AG04449 (cell line): ENCODE measurements at regions of chr17 and their contacts with region 1.

Region 1: DNA sequence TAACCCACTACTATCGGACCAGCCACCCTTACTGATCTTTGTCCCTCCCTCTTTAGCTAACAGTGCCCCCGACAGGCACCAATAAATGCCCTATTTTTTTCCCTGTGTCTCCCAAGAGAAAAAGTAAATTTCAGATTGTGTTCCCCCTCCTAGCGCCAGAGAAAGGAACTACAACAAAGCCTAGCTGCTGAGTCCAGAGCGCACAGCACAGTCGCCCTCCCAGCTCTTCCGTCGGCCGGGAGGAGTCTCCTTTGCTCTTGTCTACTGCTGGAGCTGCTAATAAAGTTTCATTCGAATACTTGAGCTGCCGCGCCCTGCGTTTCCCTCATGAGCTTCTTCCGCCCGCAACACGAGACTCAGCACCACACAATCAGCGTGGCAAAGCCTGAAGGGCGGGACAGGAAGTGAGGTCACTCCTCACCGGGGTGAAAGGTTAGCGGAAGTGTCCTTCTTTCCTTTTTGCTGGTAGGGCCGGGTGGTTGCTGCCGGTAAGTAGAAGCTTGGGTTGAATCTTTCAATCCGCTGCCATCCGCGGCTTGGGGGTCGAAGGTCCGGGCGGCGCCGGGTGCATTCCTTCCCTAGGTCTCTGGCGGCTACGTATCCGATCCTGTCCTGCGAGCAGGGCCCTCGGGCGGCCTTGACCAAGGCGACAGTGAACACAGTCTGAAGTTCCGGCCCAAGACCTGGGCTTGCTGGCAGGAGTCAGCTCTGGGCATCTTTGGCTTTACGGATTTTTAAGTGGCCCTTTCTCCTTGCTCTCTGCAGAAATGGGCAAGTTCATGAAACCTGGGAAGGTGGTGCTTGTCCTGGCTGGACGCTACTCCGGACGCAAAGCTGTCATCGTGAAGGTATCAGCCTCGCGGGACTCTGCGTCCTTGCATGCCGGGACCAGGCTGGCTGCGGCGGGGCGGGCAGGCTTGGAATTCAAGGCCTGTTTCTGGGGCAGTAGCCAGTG is at the start of gene RPL27:
- DNase-seq: peak; percentile 100
- H3K4me3 ChIP-seq: peak within 1 kb of the TSS; percentile 93
- CTCF ChIP-seq: peak; percentile 65

Region 2: DNA sequence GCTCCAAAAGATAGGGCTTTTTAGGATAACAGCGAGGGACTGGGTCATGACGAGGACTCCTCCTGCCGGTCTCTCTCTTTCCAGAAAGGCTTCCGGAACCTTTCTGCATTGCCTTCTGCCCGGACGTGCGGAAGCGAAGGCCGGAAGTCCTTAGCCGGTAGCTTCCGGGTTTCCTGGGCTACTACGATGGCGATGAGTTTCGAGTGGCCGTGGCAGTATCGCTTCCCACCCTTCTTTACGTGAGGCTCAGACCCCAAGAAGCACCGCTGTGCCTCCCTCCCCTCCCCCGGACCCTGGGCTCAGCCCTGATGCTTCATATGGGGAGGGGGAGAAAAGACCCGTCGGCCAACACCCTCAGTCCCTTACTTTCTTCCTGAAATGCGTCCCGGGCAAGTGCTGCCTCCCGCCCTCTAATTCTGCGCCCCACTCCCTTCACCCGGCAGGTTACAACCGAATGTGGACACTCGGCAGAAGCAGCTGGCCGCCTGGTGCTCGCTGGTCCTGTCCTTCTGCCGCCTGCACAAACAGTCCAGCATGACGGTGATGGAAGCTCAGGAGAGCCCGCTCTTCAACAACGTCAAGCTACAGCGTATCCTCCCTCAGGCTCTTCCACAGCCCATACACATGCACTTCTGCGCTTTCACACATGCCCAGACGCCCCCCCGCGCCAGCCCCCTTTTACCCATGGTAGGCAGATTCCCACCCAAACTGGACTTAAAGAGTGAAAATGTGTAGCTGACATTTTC is 224.8 kb before region 1 on chr17 and contains the start of gene VPS25:
- CTCF ChIA-PET with region 1: no interaction called
- POLR2A ChIA-PET with region 1: no interaction called
- DNase-seq: no peak
- H3K4me3 ChIP-seq: peak within 1 kb of the TSS; percentile 91
- CTCF ChIP-seq: peak; percentile 37

Region 3: GRCh38 chr17:42843358-42843934 is 154.8 kb before region 1 on chr17:
- CTCF ChIA-PET with region 1: interaction called, 26 read pairs
- POLR2A ChIA-PET with region 1: interaction called, 4 read pairs
- DNase-seq: no peak
- H3K4me3 ChIP-seq: no peak overlapping the region
- CTCF ChIP-seq: peak; percentile 94

Region 4: DNA sequence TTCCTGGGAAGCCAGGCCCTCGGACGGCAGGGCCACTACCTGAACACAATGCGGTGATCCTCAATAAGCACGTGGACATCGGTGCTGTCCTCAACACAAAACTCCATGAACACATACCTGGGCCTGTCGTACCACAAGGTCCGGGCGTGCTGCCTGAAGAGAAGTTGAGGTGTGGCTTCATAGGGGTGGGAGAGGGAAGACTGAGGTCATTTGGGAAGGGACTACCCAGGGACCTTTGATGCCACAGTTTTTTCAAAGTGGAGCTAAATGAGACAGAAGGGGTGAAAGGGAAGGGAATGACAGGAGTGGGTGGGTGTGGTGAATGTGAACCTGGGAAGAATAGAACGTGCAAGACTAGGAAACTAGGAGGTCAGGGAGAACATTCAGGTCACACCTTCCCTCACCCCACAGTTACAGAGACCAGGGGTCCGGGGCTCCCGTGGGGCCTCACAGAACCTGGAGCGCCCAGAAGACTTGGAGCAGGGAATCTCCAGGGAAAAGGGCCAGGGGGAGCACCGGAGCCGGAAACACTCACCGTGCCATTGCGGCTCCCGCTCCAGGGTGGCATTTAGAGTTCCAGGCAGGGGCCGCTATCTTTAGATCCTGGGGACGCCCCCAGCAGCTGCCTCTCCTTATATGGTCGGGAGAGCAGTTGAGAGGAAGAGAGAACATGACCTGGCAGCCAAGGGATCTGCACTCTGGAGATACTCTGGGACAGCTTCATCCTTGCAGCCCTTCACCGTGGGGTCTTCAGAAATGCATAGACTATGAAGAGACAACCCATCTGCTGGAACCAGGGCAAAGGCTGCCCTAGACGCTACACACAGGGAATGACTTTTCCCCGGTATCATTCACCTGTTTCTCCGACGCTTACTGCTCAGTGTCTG is 18.5 kb before region 1 on chr17 and contains the start of gene PTGES3L:
- CTCF ChIA-PET with region 1: interaction called, 14 read pairs
- POLR2A ChIA-PET with region 1: interaction called, 5 read pairs
- DNase-seq: no peak
- H3K4me3 ChIP-seq: peak within 1 kb of the TSS; percentile 78
- CTCF ChIP-seq: no peak

Region 5: DNA sequence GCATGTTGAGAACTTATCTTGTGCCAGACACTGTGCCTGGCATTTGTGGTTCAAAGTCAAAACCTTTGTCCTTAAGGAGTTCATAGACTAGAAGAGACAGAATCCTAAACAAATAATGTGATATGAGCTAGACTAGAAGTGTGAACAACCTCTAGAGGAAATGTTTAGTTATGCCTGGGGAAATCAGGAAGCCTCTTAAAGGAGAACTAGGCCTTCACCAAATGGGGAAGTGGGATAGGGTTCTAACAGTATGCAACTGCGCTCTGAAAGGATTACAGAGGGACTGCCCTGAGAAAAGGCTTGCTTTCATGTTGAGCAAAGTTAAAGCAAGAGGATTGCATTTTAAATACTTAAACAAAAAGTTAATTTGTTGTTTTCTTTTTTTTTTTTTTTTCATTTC is 13.0 kb before region 1 on chr17:
- CTCF ChIA-PET with region 1: interaction called, 35 read pairs
- POLR2A ChIA-PET with region 1: interaction called, 5 read pairs
- DNase-seq: no peak
- H3K4me3 ChIP-seq: no peak overlapping the region
- CTCF ChIP-seq: no peak

Region 6: GRCh38 chr17:43011728-43012472 is 13.6 kb after region 1 on chr17:
- CTCF ChIA-PET with region 1: interaction called, 13 read pairs
- POLR2A ChIA-PET with region 1: interaction called, 22 read pairs
- DNase-seq: no peak
- H3K4me3 ChIP-seq: no peak overlapping the region
- CTCF ChIP-seq: no peak

Region 7: DNA sequence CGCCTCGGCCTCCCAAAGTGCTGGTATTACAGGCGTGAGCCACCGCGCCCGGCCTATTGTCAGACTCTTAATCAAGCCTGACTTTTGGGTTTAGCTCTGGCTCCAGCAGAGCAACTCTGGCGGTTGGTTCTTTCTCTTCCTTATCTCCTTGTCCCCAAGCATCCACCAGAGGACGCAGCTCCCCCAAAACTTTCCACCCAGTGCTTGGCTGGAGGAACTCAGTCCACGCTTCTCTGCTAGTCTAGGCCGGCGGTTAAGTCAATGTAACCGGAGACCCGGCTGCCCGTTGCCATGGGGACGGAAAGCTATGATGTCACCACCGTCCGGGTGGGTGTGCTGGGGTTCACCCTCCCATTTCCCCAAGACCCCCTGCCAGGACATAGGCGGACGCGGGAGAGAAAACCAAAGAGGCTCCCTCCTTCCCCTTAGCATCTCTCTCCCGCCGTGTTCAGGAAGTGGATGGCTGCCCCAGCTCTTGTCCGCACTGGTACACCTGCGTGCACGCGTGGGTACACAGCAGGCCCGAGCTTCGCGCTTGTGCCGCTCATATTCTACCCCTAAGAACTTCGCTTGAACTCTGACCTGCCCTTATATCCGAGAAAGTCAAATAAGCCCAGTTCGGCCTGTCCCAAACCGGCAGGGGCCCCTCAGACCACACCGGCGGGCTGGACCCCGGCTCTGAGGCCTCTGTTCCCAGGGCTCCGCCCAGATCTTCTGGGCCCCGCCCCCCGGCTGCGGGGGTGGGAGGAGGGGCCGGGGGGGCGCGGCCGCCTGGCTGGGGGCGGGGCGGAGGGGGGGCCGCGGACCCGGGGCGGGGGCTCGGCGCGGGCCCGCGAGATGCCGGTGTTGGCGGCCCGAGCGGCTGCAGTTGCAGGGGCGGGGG is 26.4 kb after region 1 on chr17 and contains the start of gene RND2:
- CTCF ChIA-PET with region 1: interaction called, 6 read pairs
- POLR2A ChIA-PET with region 1: interaction called, 13 read pairs
- DNase-seq: peak; percentile 56
- H3K4me3 ChIP-seq: peak within 1 kb of the TSS; percentile 66
- CTCF ChIP-seq: peak; percentile 84